A549 (cell line): ENCODE measurements at regions of chr18 and their contacts with region 1.

Region 1: GRCh38 chr18:1585879-1586488 is 681.3 kb downstream of the ADCYAP1 start:
- DNase-seq: peak; percentile 0 to 13
- ATAC-seq: peak in 1 of 2 experiments; percentile 68; a peak in 4 of 6 replicates
- H3K4me3 ChIP-seq: no peak overlapping the region
- H3K27ac ChIP-seq: no peak overlapping the region
- H3K4me1 ChIP-seq: no peaks in the 10 kb centered on the region
- CTCF ChIP-seq: peak; percentile 50
- EP300 ChIP-seq: no peak
- POLR2A ChIP-seq: no peak
- RAD21 ChIP-seq: peak; percentile 29 to 47; a peak in 4 of 5 replicates

Region 2: GRCh38 chr18:2547477-2548087 is 961.6 kb after region 1 on chr18:
- CTCF ChIA-PET with region 1: interaction called, 11 read pairs
- POLR2A ChIA-PET with region 1: no interaction called
- DNase-seq: peak in 1 of 2 experiments; percentile 47
- ATAC-seq: no peak
- H3K4me3 ChIP-seq: no peak overlapping the region
- H3K27ac ChIP-seq: no peak overlapping the region
- H3K4me1 ChIP-seq: no peaks in the 10 kb centered on the region
- CTCF ChIP-seq: peak; percentile 60
- EP300 ChIP-seq: no peak
- POLR2A ChIP-seq: no peak
- RAD21 ChIP-seq: peak; percentile 60 to 67